ENCODE measurements at regions of chr16 and their contacts with region 1.

Region 1: GRCh38 chr16:67017810-67018488 is 11.0 kb upstream of the CBFB start:
- DNase-seq: peak; percentile 91
- H3K4me3 ChIP-seq: no peak overlapping the region
- H3K27ac ChIP-seq: no peak overlapping the region
- H3K4me1 ChIP-seq: peaks cover 22% of the 10 kb centered on the region
- H3K27me3 ChIP-seq: no peaks in the 10 kb centered on the region
- CTCF ChIP-seq: peak; percentile 85 to 98

Region 2: GRCh38 chr16:66824006-66824405 is 193.9 kb before region 1 on chr16:
- CTCF ChIA-PET with region 1: no interaction called
- dilution Hi-C with region 1: no loop called
- in situ Hi-C with region 1: no loop called
- intact Hi-C with region 1: no loop called
- DNase-seq: peak; percentile 56
- H3K4me3 ChIP-seq: no peak overlapping the region
- H3K27ac ChIP-seq: no peak overlapping the region
- H3K4me1 ChIP-seq: peaks cover 4% of the 10 kb centered on the region
- H3K27me3 ChIP-seq: no peaks in the 10 kb centered on the region
- CTCF ChIP-seq: no peak

Region 3: DNA sequence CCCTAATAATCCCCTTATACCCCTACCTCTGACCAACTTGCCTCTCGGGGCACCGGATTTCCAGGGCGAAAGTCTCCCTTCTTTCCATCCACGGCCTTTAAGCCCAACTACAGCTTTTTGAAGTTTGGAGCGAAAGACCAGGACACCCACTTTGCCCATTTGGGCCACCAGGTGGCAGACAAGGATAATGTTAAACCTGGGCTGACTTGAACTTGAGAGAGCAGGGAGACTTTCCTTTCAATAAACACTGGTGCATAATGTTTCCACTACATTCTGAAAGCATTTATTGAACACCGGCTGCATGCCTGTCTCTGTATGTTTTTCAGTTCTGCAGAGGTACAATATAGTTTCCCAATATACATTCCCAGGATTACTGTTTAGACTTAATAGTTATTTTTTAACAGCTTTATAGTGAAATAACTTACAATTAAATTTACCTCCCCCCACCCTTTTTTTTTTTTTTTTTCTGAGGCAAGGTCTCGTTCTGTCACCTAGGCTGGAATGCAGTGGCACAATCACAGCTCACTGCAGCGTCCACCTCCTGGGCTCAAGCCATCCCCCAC is 63.8 kb before region 1 on chr16:
- CTCF ChIA-PET with region 1: no interaction called
- dilution Hi-C with region 1: no loop called
- in situ Hi-C with region 1: no loop called
- intact Hi-C with region 1: loop called (anchors 2 kb)
- DNase-seq: peak; percentile 68
- H3K4me3 ChIP-seq: no peak overlapping the region
- H3K27ac ChIP-seq: no peak overlapping the region
- H3K4me1 ChIP-seq: peaks cover 16% of the 10 kb centered on the region
- H3K27me3 ChIP-seq: no peaks in the 10 kb centered on the region
- CTCF ChIP-seq: peak; percentile 83 to 86

Region 4: GRCh38 chr16:67084345-67085028 is 66.5 kb after region 1 on chr16:
- CTCF ChIA-PET with region 1: no interaction called
- dilution Hi-C with region 1: loop called (anchors 5 kb)
- in situ Hi-C with region 1: no loop called
- intact Hi-C with region 1: no loop called
- DNase-seq: no peak
- H3K4me3 ChIP-seq: no peak overlapping the region
- H3K27ac ChIP-seq: no peak overlapping the region
- H3K4me1 ChIP-seq: no peaks in the 10 kb centered on the region
- H3K27me3 ChIP-seq: no peaks in the 10 kb centered on the region
- CTCF ChIP-seq: no peak

Region 5: DNA sequence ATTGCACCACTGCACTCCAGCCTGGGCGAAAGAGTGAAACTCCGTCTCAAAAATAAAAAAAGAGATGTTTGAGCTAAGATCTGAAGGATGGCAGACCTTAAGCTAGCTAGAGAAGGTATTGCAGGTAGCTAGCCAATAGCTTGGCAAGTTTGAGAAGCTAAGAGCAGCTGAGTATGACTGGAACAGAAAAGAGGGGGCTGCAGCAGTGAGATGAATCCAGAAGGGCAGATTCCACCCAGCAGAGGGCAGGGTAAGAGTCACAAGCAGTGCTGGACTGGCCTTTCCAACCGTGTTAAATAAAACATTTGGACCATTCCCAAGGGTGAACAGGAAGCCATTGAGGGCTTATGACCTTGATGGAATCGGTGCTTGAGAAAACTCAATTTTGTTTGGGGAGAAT is 86.1 kb after region 1 on chr16:
- CTCF ChIA-PET with region 1: interaction called, 5 read pairs
- dilution Hi-C with region 1: no loop called
- in situ Hi-C with region 1: no loop called
- intact Hi-C with region 1: loop called (anchors 2 kb)
- DNase-seq: no peak
- H3K4me3 ChIP-seq: no peak overlapping the region
- H3K27ac ChIP-seq: no peak overlapping the region
- H3K4me1 ChIP-seq: peaks cover 5% of the 10 kb centered on the region
- H3K27me3 ChIP-seq: no peaks in the 10 kb centered on the region
- CTCF ChIP-seq: peak; percentile 34 to 40

Region 6: GRCh38 chr16:67115639-67116038 is 97.7 kb after region 1 on chr16:
- CTCF ChIA-PET with region 1: interaction called, 12 read pairs
- dilution Hi-C with region 1: no loop called
- in situ Hi-C with region 1: no loop called
- intact Hi-C with region 1: no loop called
- DNase-seq: peak; percentile 93
- H3K4me3 ChIP-seq: no peak overlapping the region
- H3K27ac ChIP-seq: peak overlapping the region; percentile 59
- H3K4me1 ChIP-seq: peaks cover 18% of the 10 kb centered on the region
- H3K27me3 ChIP-seq: no peaks in the 10 kb centered on the region
- CTCF ChIP-seq: no peak

Region 7: GRCh38 chr16:67159593-67160406 is 141.9 kb after region 1 on chr16 and contains the starts of genes FBXL8 and TRADD:
- CTCF ChIA-PET with region 1: interaction called, 21 read pairs
- dilution Hi-C with region 1: no loop called
- in situ Hi-C with region 1: no loop called
- intact Hi-C with region 1: loop called (anchors 1 kb)
- DNase-seq: peak; percentile 73
- H3K4me3 ChIP-seq: peak within 1 kb of the TSS; percentile 64 to 99 (median 72)
- H3K27ac ChIP-seq: peak within 1 kb of the TSS; percentile 40
- H3K4me1 ChIP-seq: peaks cover 15% of the 10 kb centered on the region
- H3K27me3 ChIP-seq: no peaks in the 10 kb centered on the region
- CTCF ChIP-seq: peak; percentile 4 to 54
- total RNA-seq, gene FBXL8: 12.0 to 14.6 TPM
- total RNA-seq, gene TRADD: 17.8 to 18.6 TPM

Region 8: GRCh38 chr16:67183627-67184328 is 165.8 kb after region 1 on chr16 and contains the start of gene MATCAP1:
- CTCF ChIA-PET with region 1: interaction called, 9 read pairs
- dilution Hi-C with region 1: no loop called
- in situ Hi-C with region 1: no loop called
- intact Hi-C with region 1: loop called (anchors 1 kb)
- DNase-seq: peak; percentile 97
- H3K4me3 ChIP-seq: peak within 1 kb of the TSS; percentile 43 to 82 (median 69)
- H3K27ac ChIP-seq: peak within 1 kb of the TSS; percentile 76
- H3K4me1 ChIP-seq: peaks cover 49% of the 10 kb centered on the region
- H3K27me3 ChIP-seq: no peaks in the 10 kb centered on the region
- CTCF ChIP-seq: no peak
- total RNA-seq, gene MATCAP1: 8.0 to 24.9 TPM